ENCODE measurements at regions of chr1 and their contacts with region 1.

Region 1: GRCh38 chr1:54070171-54070837 is 16.9 kb downstream of the TCEANC2 start:
- DNase-seq: no peak
- ATAC-seq: peak; percentile 97
- H3K4me3 Mint-ChIP-seq: no peak overlapping the region
- H3K27ac Mint-ChIP-seq: no peak overlapping the region
- H3K4me1 Mint-ChIP-seq: no peaks in the 10 kb centered on the region
- H3K27me3 Mint-ChIP-seq: no peaks in the 10 kb centered on the region

Region 2: GRCh38 chr1:54081306-54082270 is 11.3 kb after region 1 on chr1:
- CTCF ChIA-PET with region 1: interaction called, 12 read pairs
- POLR2A ChIA-PET with region 1: no interaction called
- intact Hi-C with region 1: no loop called
- DNase-seq: peak; percentile 81
- ATAC-seq: peak; percentile 96
- H3K4me3 Mint-ChIP-seq: no peak overlapping the region
- H3K27ac Mint-ChIP-seq: no peak overlapping the region
- H3K4me1 Mint-ChIP-seq: peaks cover 7% of the 10 kb centered on the region
- H3K27me3 Mint-ChIP-seq: no peaks in the 10 kb centered on the region

Measured in activated CD4-positive, alpha-beta T cell treated with anti-CD3 and anti-CD28 coated beads for 36 hours (primary cell).